ENCODE measurements at regions of chr7 and their contacts with region 1.

Region 1: DNA sequence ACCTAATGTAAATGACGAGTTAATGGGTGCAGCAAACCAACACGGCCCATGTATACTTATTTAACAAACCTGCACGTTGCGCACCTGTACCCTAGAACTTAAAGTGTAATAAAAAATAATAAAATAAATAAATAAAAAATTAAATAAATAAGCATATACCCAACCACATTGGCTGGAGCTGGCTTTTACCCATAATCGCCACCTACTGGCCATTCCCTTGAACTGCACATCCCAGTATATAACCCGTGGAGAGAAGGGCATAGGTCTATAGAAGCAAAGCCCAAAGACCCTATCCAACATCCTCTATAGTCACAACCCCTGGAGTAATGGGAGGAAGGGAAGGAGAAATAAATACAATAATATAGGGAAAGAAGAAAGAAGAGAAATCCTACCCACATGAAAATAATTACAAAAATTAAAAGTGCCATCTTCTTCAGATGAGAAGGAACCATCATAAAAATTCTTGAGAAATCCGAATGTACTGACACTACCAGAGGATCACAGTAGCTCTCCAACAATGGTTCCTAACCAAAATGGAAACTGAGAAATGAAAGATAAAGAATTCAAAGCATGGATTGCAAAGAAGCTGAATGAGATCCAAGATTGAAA is 65.6 kb downstream of the TWIST1 start:
- DNase-seq: no peak
- ATAC-seq: peak; percentile 76
- H3K4me3 ChIP-seq: no peak overlapping the region
- H3K27ac ChIP-seq: no peak overlapping the region
- H3K4me1 ChIP-seq: no peaks in the 10 kb centered on the region
- H3K27me3 ChIP-seq: no peaks in the 10 kb centered on the region
- CTCF ChIP-seq: peak; percentile 66 to 78 (median 68)
- EP300 ChIP-seq: no peak
- POLR2A ChIP-seq: no peak
- RAD21 ChIP-seq: peak; percentile 57

Region 2: GRCh38 chr7:18590744-18591340 is 461.0 kb before region 1 on chr7:
- CTCF ChIA-PET with region 1: no interaction called
- POLR2A ChIA-PET with region 1: no interaction called
- RAD21 ChIA-PET with region 1: no interaction called
- SMC1A ChIA-PET with region 1: no interaction called
- in situ Hi-C with region 1: no loop called
- intact Hi-C with region 1: loop called (anchors 10 kb)
- DNase-seq: no peak
- ATAC-seq: peak; percentile 69
- H3K4me3 ChIP-seq: no peak overlapping the region
- H3K27ac ChIP-seq: no peak overlapping the region
- H3K4me1 ChIP-seq: no peaks in the 10 kb centered on the region
- H3K27me3 ChIP-seq: no peaks in the 10 kb centered on the region
- CTCF ChIP-seq: peak; percentile 22 to 39 (median 30); a peak in 3 of 6 replicates
- EP300 ChIP-seq: no peak
- POLR2A ChIP-seq: no peak
- RAD21 ChIP-seq: peak; percentile 53

Region 3: DNA sequence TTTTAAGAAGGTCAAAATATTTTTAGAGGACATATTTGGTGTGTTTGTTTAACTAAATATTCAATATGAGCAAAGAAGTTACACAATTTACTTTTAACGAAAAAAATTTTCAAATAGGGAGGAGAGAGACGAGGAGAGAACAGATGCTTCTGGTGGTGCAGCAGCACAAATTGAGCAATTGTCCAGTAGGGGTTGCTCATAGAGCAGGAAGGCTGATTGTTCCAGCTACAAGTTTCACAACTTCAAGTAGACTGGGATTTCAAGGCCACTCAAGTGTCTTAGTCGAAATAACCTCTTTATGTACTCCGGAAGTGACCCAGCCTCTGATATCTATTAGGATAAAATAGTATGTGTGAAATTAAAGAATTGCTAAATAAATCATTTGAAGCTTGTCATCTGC is 358.5 kb before region 1 on chr7:
- CTCF ChIA-PET with region 1: interaction called, 11 read pairs
- POLR2A ChIA-PET with region 1: no interaction called
- RAD21 ChIA-PET with region 1: interaction called, 4 read pairs
- SMC1A ChIA-PET with region 1: no interaction called
- in situ Hi-C with region 1: no loop called
- intact Hi-C with region 1: loop called (anchors 5 kb)
- DNase-seq: no peak
- ATAC-seq: peak; percentile 54; the same call in 2 of the 3 replicates
- H3K4me3 ChIP-seq: no peak overlapping the region
- H3K27ac ChIP-seq: no peak overlapping the region
- H3K4me1 ChIP-seq: no peaks in the 10 kb centered on the region
- H3K27me3 ChIP-seq: no peaks in the 10 kb centered on the region
- CTCF ChIP-seq: peak; percentile 13 to 46 (median 27); a peak in 3 of 6 replicates
- EP300 ChIP-seq: no peak
- POLR2A ChIP-seq: no peak
- RAD21 ChIP-seq: peak; percentile 59

Measured in GM12878 (cell line).